ENCODE measurements at regions of chr9 and their contacts with region 1.

Region 1: DNA sequence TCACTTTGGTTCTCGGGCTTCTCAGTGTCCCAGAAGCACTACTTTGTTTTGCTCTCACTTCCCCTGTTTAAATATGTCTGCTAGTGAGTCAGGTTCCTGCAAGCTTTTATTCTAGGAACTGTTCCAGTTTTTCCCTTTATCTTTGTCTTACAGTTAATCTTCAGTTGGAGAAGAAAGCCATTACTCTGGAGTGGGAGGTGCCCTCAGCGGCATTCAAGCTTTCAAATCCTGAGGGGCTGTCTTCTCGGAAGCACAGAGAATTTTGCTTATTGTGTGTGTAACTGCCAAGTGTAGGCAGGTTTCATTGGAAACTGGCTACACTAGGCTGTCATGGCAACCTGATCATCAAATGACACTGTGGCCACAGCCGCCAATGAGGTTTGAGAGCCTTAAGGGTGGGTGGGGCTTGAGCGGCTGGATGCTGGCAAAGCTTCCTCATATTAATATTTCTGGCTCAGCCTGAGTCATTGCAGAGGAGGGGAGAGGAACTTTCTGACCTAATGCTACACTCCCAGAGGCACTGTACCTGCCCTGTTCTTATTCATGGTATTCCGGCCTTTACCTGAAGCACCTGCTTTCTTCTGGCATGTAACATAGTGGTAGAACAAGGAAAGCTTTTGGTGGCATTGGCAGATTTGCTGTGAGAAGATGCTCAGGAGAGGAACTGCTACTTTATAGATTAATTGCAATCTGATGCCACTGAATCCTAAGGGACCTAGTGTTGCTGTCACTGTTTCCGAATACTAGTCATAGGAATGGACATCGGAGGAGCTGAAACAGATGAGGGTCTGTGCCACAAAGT is 26.3 kb downstream of the SLC25A25 start:
- DNase-seq: peak; percentile 46
- ATAC-seq: peak; percentile 89
- H3K4me3 ChIP-seq: no peak overlapping the region
- H3K27ac ChIP-seq: no peak overlapping the region
- H3K4me1 ChIP-seq: peaks cover 20% of the 10 kb centered on the region
- H3K27me3 ChIP-seq: no peaks in the 10 kb centered on the region
- CTCF ChIP-seq: no peak

Region 2: DNA sequence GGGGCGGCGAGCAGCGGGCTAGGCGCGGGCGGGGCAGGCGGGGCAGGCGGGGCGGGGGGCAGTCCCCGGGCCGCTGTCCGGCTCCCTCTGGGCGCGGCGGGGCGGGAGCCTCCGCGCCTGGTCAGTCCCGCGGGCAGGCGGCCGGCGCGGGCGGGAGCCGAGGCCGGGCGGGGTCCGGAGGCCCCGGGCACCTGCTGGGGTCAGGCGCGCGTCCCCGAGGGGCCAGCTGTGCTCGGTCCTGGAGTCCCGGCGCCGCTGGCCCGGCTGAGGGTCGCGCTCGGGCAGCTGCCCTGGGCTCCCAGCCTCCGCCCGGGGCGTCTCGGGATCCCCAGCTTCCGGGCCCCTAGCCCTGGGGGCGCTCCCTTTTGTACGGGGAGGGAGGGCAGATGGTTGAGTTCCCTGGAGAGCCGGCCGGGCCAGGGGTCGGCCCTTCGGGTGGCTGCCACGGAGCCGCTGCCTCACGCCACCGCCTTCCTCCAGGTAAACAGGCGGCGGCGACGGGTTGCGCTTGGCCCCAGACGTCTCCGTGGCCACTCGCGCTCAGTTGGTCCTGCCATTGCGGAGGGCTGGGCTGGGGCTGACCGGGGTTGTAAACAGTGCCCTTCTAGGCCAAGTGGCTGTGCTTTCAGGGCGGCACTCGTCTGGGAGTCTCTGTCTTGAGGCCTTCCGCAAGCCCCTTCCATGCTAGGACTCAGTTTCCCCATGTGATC is 1233.5 kb before region 1 on chr9:
- CTCF ChIA-PET with region 1: no interaction called
- POLR2A ChIA-PET with region 1: no interaction called
- in situ Hi-C with region 1: no loop called
- intact Hi-C with region 1: no loop called
- DNase-seq: no peak
- ATAC-seq: peak; percentile 83
- H3K4me3 ChIP-seq: peak overlapping the region; percentile 71 to 81
- H3K27ac ChIP-seq: peak overlapping the region; percentile 36
- H3K4me1 ChIP-seq: peaks cover 17% of the 10 kb centered on the region
- H3K27me3 ChIP-seq: no peaks in the 10 kb centered on the region
- CTCF ChIP-seq: no peak

Region 3: GRCh38 chr9:127756233-127756632 is 338.1 kb before region 1 on chr9:
- CTCF ChIA-PET with region 1: interaction called, 14 read pairs
- POLR2A ChIA-PET with region 1: no interaction called
- in situ Hi-C with region 1: no loop called
- intact Hi-C with region 1: no loop called
- DNase-seq: no peak
- ATAC-seq: no peak
- H3K4me3 ChIP-seq: no peak overlapping the region
- H3K27ac ChIP-seq: no peak overlapping the region
- H3K4me1 ChIP-seq: no peaks in the 10 kb centered on the region
- H3K27me3 ChIP-seq: peaks cover 2% of the 10 kb centered on the region; the same call in 1 of the 2 replicates
- CTCF ChIP-seq: no peak

Region 4: DNA sequence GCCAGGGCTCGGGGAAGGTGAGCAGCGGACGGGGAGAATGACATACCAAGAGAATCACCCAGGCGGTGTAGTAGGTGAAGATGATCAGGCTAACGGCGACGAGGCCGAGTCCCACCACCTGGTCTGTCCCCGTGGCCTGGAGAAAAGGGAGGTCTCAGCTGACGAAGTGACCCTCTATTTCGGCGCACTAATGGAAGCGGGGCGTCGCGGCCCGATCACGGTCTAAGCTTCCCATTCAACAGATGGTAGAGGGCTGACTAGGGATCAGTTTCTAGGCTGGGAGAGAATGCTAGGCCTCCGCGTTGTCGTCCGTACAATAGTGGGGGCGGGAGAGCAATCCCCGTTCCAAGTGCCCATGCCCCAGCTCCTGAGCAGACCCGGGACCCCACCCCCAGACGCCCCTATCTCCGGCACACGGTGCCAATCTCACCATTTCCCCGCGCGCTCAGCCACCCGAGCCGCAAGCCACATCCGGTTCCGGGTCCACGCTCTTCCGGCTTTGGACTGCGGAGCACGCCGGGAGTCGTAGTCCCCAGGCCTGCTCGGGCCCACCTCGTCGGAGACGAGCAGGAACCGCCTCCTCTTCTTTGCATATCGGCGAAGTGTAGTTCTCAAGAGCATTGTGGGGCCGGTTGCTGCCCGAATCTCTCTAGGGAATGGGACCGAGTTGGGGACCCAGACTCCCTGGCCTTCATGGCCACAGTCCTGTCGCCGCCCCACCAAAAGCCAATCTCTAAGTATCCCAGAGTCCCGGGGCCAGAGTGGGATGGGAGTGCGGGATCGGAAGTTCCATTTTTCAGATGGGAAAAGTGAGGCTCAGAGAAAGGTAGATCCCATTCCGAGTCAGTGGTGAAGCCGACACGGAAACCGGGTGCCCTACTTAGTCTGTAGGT is 156.7 kb before region 1 on chr9 and contains the start of gene DPM2:
- CTCF ChIA-PET with region 1: no interaction called
- POLR2A ChIA-PET with region 1: no interaction called
- in situ Hi-C with region 1: loop called (anchors 25 kb)
- intact Hi-C with region 1: no loop called
- DNase-seq: peak; percentile 70
- ATAC-seq: peak; percentile 79
- H3K4me3 ChIP-seq: peak within 1 kb of the TSS; percentile 65 to 66
- H3K27ac ChIP-seq: peak within 1 kb of the TSS; percentile 93
- H3K4me1 ChIP-seq: peaks cover 59% of the 10 kb centered on the region
- H3K27me3 ChIP-seq: no peaks in the 10 kb centered on the region
- CTCF ChIP-seq: no peak
- total RNA-seq, gene DPM2: 58.7 TPM